Endothelial cell of umbilical vein (primary cell): ENCODE measurements at regions of chr10 and their contacts with region 1.

Region 1: DNA sequence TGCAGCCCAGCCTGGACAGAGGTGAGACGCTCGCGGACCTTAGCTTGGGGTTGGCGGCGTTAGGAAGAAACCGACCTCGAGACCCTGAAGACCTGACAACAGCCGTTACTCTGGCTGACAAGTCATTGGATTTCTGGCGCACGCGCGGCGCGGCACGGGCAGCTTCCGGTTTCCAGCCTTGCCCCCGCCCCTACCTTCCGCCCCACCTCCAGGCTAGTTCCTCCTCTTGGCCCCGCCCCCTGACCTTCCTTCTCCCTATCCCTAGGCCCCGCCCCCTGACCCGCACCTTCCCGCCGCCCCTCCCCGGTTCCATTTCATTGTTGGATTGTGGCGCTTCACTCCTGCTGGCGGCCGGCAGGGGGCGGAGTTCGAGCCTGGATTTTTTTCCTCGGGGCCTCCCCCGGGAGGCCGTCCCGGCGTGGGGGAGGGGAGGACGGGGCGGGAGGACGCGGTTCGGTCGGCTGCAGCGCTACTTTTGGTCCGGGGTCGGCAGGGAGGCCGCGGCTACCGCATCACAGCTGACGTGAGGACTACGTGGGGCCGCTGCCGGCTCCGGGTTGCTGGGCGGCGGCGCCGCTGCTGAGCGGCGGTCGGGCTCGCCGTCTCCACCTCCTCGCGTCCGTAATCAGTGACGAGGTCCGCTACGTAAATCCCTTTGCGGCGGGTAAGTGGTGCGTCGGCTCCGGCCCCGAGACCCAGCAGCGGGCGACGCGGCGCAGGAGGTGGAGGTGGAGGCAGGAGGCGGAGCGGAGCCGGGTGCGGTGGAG is at the start of gene CREM:
- DNase-seq: peak; percentile 97
- H3K4me3 ChIP-seq: peak within 1 kb of the TSS; percentile 65 to 85 (median 83)
- H3K27ac ChIP-seq: peak within 1 kb of the TSS; percentile 98
- H3K4me1 ChIP-seq: peaks cover 20% of the 10 kb centered on the region
- H3K27me3 ChIP-seq: no peaks in the 10 kb centered on the region
- CTCF ChIP-seq: peak; percentile 42 to 86
- POLR2A ChIP-seq: peak; percentile 92
- total RNA-seq, gene CREM: 34.8 and 35.5 TPM in 2 replicates

Region 2: DNA sequence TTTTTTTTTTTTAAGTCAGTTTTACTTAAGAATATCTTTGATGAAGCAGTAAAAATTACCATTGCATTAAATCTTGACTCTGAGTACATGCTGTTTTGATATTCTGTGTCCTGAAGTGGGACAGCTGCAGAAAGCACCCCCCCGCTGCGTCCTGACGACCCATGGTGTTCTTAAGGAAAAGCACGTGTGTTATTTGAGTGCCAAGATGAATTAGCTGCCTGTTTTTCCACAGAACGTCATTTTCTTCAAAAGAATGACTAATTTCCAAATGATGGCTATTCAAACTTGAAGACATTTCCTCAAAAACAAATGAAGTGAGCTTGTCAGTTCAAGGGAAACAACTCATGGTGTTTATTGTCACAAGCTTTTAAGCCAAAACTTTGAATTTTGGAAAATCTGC is 45.9 kb after region 1 on chr10:
- CTCF ChIA-PET with region 1: interaction called, 13 read pairs
- POLR2A ChIA-PET with region 1: no interaction called
- dilution Hi-C with region 1: no loop called
- intact Hi-C with region 1: loop called (anchors 1 kb)
- DNase-seq: peak; percentile 98
- H3K4me3 ChIP-seq: peak overlapping the region in 1 of 3 experiments; percentile 18
- H3K27ac ChIP-seq: peak overlapping the region; percentile 65
- H3K4me1 ChIP-seq: peaks cover 17% of the 10 kb centered on the region
- H3K27me3 ChIP-seq: no peaks in the 10 kb centered on the region
- CTCF ChIP-seq: no peak
- POLR2A ChIP-seq: no peak

Region 3: GRCh38 chr10:35218339-35218955 is 91.7 kb after region 1 on chr10:
- CTCF ChIA-PET with region 1: interaction called, 103 read pairs
- POLR2A ChIA-PET with region 1: no interaction called
- dilution Hi-C with region 1: loop called (anchors 25 kb)
- intact Hi-C with region 1: loop called (anchors 1 kb)
- DNase-seq: peak; percentile 86
- H3K4me3 ChIP-seq: no peak overlapping the region
- H3K27ac ChIP-seq: no peak overlapping the region
- H3K4me1 ChIP-seq: peaks cover 3% of the 10 kb centered on the region
- H3K27me3 ChIP-seq: no peaks in the 10 kb centered on the region
- CTCF ChIP-seq: peak; percentile 62 to 80
- POLR2A ChIP-seq: no peak

Region 4: DNA sequence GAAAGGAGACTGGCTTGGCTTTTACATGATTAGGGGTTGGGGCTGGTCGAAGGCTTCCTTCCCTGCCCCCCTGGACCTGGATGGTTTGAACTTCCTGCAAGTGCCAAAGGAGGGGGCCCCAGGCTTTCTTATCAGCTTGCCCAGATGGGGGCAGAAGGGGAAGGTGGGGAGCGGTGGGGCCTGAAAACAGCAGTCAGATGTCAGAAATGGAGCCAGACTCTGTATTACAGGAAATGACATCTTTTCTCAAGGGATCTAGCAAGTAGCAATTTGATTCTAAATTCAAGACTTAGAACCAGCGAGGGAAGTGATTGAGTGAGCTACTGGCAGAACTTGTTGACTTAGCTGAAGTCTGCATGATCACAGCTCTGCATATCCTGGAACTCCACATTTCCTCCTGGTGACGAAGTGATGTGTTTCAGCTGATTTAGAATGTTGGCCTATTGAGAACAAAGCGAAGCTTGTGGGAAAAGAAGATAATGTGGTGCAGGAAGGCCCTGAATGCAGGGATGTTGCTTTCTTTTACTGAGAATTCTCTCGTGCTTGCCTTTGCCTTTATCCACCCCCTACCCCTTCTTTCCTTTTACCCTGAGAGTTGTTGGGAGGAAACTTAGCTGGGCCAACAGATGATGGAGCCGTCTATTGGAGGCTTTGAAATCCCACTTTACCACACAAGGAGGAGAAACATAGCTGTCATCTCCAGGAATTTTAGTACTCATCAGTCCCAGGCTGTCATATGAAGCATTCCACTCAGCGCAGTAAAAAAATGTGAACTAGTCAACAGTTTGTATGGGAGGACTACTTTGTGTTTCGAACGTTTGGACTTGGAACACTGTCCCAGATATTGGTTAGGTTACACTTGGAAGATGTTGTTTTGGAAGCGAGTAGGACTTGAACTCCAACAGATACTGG is 252.8 kb after region 1 on chr10:
- CTCF ChIA-PET with region 1: interaction called, 3 read pairs
- POLR2A ChIA-PET with region 1: no interaction called
- dilution Hi-C with region 1: no loop called
- intact Hi-C with region 1: loop called (anchors 2 kb)
- DNase-seq: peak; percentile 99
- H3K4me3 ChIP-seq: peak overlapping the region in 1 of 3 experiments; percentile 41
- H3K27ac ChIP-seq: peak overlapping the region; percentile 97
- H3K4me1 ChIP-seq: peaks cover 51% of the 10 kb centered on the region
- H3K27me3 ChIP-seq: no peaks in the 10 kb centered on the region
- CTCF ChIP-seq: peak; percentile 7 to 16
- POLR2A ChIP-seq: no peak

Region 5: DNA sequence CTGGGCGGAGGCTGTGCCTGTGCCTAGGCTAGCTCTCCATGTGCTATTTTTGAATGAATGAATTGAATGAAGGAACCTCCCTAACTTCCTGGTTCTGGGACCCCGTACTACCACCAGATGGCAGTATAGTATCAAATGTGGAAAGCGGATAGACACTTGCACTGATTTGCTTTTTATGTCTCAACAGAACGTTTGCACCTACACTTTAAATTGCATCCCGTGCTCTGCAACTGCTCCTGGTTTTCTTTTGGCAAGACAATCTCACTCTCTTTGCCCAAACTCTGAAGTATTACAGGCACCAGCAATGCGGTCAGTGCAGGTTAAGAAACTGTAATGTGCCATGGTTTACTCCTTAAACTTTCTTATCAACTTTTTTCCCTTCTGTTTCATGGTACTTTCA is 508.9 kb after region 1 on chr10:
- CTCF ChIA-PET with region 1: interaction called, 9 read pairs
- POLR2A ChIA-PET with region 1: no interaction called
- dilution Hi-C with region 1: no loop called
- intact Hi-C with region 1: loop called (anchors 5 kb)
- DNase-seq: peak; percentile 79
- H3K4me3 ChIP-seq: no peak overlapping the region
- H3K27ac ChIP-seq: no peak overlapping the region
- H3K4me1 ChIP-seq: peaks cover 18% of the 10 kb centered on the region
- H3K27me3 ChIP-seq: peaks cover 2 to 3% of the 10 kb centered on the region in 2 experiments
- CTCF ChIP-seq: peak; percentile 77 to 85
- POLR2A ChIP-seq: no peak